ENCODE measurements at regions of chr12 and their contacts with region 1.

Region 1: DNA sequence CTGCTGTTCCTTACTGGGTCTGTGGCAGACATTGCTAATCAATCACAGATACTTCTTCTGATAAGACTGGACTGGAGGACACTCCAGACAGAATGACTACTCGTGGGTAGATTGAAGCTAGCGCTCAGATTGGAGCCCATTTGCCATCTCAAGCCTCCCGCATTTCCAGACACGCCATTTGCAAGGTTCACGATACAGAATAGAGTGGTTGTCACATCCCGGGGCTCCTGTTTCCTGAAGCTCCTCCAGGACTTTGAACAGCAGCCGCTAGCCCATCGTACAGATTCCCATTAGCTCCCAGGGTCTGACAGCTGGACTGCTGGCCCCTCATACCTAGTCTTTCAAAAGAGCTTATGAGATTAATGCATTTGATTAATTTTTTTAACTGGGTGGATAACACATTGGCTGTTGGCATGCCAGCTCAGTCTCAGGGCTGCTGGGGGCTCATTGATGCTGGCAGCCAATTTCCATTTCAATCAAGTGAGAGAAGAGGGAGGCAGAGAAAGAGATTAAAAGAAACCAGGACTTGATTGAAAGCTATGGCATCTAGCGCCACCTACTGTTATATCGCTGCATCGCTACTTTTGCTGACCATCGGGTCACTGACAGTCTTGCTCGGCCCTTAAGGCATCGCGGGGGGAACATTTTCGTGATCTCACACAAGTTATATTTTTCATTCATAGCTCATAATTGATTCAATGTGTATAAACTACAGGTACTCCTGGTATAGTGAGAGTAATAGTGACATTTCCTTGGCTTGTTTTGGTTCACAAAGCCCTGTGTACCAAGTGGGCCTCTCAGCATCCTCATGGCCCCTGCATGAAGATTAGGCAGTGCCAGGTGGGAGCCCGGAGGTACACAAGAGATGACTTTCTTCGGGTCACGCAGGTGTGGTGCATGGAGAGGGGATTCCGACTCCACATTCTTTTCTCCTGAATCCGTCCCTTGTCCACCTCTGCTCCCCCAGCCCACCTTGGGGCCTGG is 78.6 kb downstream of the CCDC60 start:
- DNase-seq: peak; percentile 91
- ATAC-seq: peak; percentile 77
- H3K4me3 Mint-ChIP-seq: peak overlapping the region; percentile 43
- H3K27ac Mint-ChIP-seq: no peak overlapping the region
- H3K4me1 Mint-ChIP-seq: peaks cover 26% of the 10 kb centered on the region
- H3K27me3 Mint-ChIP-seq: no peaks in the 10 kb centered on the region; the same call in 1 of the 2 replicates
- CTCF ChIP-seq: peak; percentile 83

Region 2: GRCh38 chr12:118979763-118980406 is 433.2 kb before region 1 on chr12:
- CTCF ChIA-PET with region 1: interaction called, 13 read pairs
- POLR2A ChIA-PET with region 1: interaction called, 4 read pairs
- DNase-seq: peak; percentile 77
- ATAC-seq: peak; percentile 60
- H3K4me3 Mint-ChIP-seq: peak overlapping the region; percentile 78
- H3K27ac Mint-ChIP-seq: no peak overlapping the region
- H3K4me1 Mint-ChIP-seq: peaks cover 13% of the 10 kb centered on the region
- H3K27me3 Mint-ChIP-seq: peaks cover 30% of the 10 kb centered on the region
- CTCF ChIP-seq: peak; percentile 72

Region 3: GRCh38 chr12:119153477-119153876 is 259.6 kb before region 1 on chr12:
- CTCF ChIA-PET with region 1: interaction called, 15 read pairs
- POLR2A ChIA-PET with region 1: interaction called, 6 read pairs
- DNase-seq: peak; percentile 99
- ATAC-seq: peak; percentile 84
- H3K4me3 Mint-ChIP-seq: peak overlapping the region; percentile 98
- H3K27ac Mint-ChIP-seq: peak overlapping the region; percentile 99
- H3K4me1 Mint-ChIP-seq: peaks cover 19% of the 10 kb centered on the region
- H3K27me3 Mint-ChIP-seq: no peaks in the 10 kb centered on the region
- CTCF ChIP-seq: no peak

Region 4: DNA sequence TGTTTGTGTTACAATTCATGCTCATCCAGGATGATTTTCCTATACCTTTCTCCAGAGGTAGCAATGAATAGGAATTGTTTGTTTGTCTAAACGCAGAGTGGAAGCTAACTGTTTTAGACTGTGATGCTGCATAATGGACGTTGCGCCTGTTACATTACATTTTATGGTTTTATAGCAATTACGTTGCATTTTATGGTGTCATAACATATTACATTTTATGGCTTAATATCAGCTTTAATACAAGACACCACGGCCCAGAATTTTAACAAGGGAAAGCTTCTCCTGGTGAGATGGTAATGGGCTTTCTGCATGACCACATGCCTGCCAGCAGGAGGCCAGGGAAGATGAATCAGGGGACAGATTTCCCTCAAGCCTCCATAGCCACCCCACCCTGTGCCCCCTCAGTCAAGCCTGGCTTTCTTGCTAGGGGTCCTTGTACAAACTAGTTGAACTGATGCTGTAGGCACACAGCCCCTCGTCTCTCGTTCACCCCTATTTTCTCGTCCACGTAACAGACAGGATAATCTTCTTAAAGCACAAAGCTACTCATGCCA is 177.8 kb before region 1 on chr12:
- CTCF ChIA-PET with region 1: interaction called, 10 read pairs
- POLR2A ChIA-PET with region 1: no interaction called
- DNase-seq: peak; percentile 31
- ATAC-seq: peak; percentile 64
- H3K4me3 Mint-ChIP-seq: no peak overlapping the region
- H3K27ac Mint-ChIP-seq: peak overlapping the region; percentile 96; the same call in 1 of the 2 replicates
- H3K4me1 Mint-ChIP-seq: peaks cover 57% of the 10 kb centered on the region
- H3K27me3 Mint-ChIP-seq: no peaks in the 10 kb centered on the region
- CTCF ChIP-seq: no peak

Region 5: GRCh38 chr12:119328111-119328510 is 85.0 kb before region 1 on chr12:
- CTCF ChIA-PET with region 1: interaction called, 10 read pairs
- POLR2A ChIA-PET with region 1: no interaction called
- DNase-seq: peak; percentile 75
- ATAC-seq: peak; percentile 100
- H3K4me3 Mint-ChIP-seq: no peak overlapping the region
- H3K27ac Mint-ChIP-seq: no peak overlapping the region
- H3K4me1 Mint-ChIP-seq: no peaks in the 10 kb centered on the region; the same call in 1 of the 2 replicates
- H3K27me3 Mint-ChIP-seq: peaks cover 20% of the 10 kb centered on the region
- CTCF ChIP-seq: peak; percentile 67

Region 6: GRCh38 chr12:119369907-119370546 is 43.1 kb before region 1 on chr12:
- CTCF ChIA-PET with region 1: interaction called, 11 read pairs
- POLR2A ChIA-PET with region 1: no interaction called
- DNase-seq: no peak
- ATAC-seq: peak; percentile 16; the same call in 1 of the 2 replicates
- H3K4me3 Mint-ChIP-seq: no peak overlapping the region
- H3K27ac Mint-ChIP-seq: peak overlapping the region; percentile 46
- H3K4me1 Mint-ChIP-seq: peaks cover 44% of the 10 kb centered on the region
- H3K27me3 Mint-ChIP-seq: no peaks in the 10 kb centered on the region
- CTCF ChIP-seq: no peak

Region 7: GRCh38 chr12:119423285-119423684 is 10.2 kb after region 1 on chr12:
- CTCF ChIA-PET with region 1: interaction called, 13 read pairs
- POLR2A ChIA-PET with region 1: no interaction called
- DNase-seq: peak; percentile 74
- ATAC-seq: peak; percentile 100
- H3K4me3 Mint-ChIP-seq: peak overlapping the region; percentile 0; the same call in 1 of the 2 replicates
- H3K27ac Mint-ChIP-seq: no peak overlapping the region
- H3K4me1 Mint-ChIP-seq: peaks cover 7% of the 10 kb centered on the region
- H3K27me3 Mint-ChIP-seq: no peaks in the 10 kb centered on the region; the same call in 1 of the 2 replicates
- CTCF ChIP-seq: no peak

Measured in WTC11 (cell line).